ENCODE measurements at regions of chr1 and their contacts with region 1.

Region 1: DNA sequence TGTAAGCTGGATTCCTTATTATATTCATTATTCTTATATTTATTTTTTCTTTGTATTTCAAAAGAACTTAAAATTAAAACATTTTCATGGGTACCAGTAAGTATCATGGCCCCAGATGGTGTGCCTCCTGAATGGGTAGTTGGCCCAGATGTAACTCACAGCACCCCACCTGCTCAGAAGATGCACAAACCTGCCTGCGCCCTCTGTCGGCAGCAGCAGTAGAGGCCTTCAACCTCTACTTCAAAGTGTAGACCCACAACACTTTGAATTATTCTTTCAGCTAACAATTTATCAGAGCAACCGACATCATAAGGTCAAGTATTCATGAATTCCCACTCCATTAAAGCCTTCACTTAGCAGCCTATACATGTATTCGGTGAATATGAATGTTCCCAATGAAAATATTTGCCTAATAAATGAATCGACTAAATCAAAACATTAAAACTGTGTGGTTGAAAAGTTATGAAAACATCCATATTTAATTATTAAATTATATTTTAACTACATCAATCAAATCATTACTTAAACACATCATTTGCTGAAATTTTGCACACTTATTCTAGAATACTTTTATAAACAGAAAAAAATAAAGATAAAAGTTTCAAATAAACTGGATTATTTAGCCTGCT is 25.4 kb downstream of the PIGM start:
- DNase-seq: peak; percentile 82 to 91
- H3K4me3 ChIP-seq: no peak overlapping the region
- H3K27ac ChIP-seq: no peak overlapping the region
- H3K4me1 ChIP-seq: no peaks in the 10 kb centered on the region
- H3K27me3 ChIP-seq: no peaks in the 10 kb centered on the region
- CTCF ChIP-seq: peak in 5 of 7 experiments; percentile 69 to 82 (median 75)
- EP300 ChIP-seq: no peak
- POLR2A ChIP-seq: no peak

Region 2: GRCh38 chr1:159798893-159799292 is 207.5 kb before region 1 on chr1:
- intact Hi-C with region 1: loop called (anchors 10 kb)
- DNase-seq: peak; percentile 74 to 91
- H3K4me3 ChIP-seq: no peak overlapping the region
- H3K27ac ChIP-seq: no peak overlapping the region
- H3K4me1 ChIP-seq: no peaks in the 10 kb centered on the region
- H3K27me3 ChIP-seq: peaks cover 0 to 26% (median 5%) of the 10 kb centered on the region in 3 donors
- CTCF ChIP-seq: peak in 5 of 7 experiments; percentile 60 to 89 (median 76)
- EP300 ChIP-seq: no peak
- POLR2A ChIP-seq: no peak

Region 3: DNA sequence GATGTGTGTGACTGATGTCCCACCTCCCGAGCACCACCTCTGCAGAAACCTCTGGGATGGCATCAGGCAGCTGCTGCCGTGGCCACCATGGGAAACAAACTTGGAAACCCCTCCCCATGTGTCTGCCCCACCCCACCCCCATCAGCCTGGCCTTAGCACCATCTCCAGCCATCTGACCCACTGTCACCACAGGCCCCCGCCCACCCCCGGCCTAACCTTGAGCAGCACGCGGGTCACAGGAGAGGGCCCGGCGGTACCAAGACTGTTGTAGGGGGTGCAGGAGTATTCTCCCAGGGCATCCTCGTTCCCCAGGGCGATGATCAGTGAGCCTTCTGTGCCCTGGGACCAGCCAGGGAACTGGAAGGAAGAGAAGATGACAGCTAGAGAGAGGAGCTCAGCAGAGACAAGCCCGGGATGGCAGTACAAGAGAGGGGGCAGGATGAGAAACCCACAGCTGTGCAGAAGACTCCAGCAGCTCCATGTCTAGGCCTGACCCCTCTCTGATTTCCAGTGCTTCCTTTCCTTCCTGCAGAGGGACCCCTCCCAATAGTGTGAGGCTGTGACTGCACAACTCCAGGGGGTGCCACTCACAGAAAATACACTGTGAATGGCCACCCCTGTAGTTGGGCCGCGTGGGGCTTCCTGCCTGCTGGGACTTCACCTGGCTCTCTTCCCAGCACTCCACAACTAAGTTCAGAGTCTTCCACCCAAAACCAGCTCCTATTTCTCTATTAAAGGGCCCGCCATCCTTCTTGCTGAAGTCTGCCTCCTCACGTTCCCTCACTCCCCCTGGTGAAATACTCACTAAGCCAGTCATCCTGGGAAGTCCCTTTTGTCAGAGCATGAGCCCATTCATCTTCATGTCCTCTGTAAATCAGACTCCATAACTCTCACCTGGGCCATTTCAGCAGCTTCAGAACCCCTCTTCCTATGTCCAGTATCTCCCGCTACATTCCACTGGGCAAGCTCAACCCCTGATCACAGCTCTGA is 73.8 kb before region 1 on chr1:
- intact Hi-C with region 1: loop called (anchors 5 kb)
- DNase-seq: no peak
- H3K4me3 ChIP-seq: no peak overlapping the region
- H3K27ac ChIP-seq: no peak overlapping the region
- H3K4me1 ChIP-seq: peaks cover 11 to 18% (median 17%) of the 10 kb centered on the region in 4 donors
- H3K27me3 ChIP-seq: peaks cover 0 to 10% (median 0%) of the 10 kb centered on the region in 3 donors
- CTCF ChIP-seq: no peak
- EP300 ChIP-seq: no peak
- POLR2A ChIP-seq: no peak

Region 4: DNA sequence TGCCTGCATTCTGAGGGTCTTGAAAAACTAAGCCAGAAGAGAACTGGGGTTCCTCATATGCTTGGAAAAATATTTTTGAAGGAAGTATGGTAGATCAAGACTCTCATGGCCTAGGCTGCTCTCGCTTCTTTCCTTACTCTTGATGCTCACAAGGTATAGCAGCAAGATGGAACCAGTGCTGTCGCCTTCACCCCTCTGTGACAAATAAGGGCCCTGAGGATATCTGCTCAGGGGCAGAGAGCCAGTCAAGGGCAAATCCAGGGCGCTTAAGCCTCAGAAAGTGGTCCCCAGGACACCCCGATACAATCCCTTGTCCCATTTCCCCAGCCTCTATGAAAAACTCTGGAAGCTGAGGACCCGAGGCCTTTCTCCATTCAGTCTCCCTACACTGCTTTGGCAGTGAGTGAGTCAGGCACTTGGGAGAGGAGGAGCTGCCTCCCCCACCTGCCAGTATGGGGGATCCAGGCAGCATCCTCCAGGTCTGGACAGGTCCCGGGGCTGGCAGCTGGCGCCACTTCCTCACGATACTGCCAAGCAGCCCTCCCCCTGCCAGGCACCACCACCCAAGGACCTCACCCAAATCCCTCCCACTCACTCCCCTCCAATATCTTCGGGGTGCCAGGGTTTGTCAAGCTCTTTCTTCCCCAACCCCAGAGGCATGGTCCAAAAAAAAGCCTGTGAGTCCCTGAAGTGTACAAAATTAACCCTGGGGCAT is 62.4 kb before region 1 on chr1:
- intact Hi-C with region 1: loop called (anchors 5 kb)
- DNase-seq: peak in 1 of 2 donors; percentile 48
- H3K4me3 ChIP-seq: peak overlapping the region in 1 of 4 donors; percentile 57
- H3K27ac ChIP-seq: peak overlapping the region in 1 of 5 donors; percentile 15
- H3K4me1 ChIP-seq: peaks cover 9 to 33% (median 23%) of the 10 kb centered on the region in 4 donors
- H3K27me3 ChIP-seq: peaks cover 0 to 51% (median 3%) of the 10 kb centered on the region in 3 donors
- CTCF ChIP-seq: no peak
- EP300 ChIP-seq: no peak
- POLR2A ChIP-seq: no peak